Left ventricle myocardium inferior (tissue), 1 donor: ENCODE measurements at regions of chr20 and their contacts with region 1.

Region 1: DNA sequence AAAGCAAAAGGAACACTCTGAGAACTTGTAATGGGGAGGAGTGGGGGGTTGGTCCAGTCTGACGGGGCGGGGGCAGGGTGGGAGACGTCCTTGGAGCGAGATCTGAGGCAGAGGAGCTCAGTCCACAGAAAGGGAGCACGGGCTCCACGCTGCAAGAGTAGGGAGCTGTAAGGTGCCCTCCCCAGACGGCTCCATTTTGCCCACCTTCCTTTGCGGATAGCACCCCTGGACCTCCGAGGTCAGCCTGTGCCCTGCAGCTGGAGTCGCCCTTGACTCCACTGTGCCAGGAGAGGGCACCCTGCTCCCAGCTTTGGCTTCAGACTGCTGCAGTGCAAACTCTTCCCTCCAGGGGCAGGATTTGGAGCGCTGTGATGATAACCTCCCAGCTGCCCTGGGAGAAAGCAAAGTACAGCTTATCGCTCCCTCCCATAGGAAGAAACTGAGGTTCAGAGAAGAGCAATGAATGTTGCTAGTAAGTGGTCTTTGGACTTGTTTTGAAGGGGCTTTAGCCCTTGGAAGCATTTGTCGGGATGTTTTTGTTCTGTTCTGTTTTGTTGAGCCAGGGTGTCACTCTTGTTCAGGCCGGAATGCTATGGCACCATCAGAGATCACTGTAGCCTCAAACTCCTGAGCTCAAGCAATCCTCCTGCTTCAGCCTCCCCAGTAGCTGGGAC is 9.5 kb upstream of the AHCY start:
- DNase-seq: peak; percentile 82
- H3K4me3 ChIP-seq: peak overlapping the region; percentile 50
- H3K27ac ChIP-seq: no peak overlapping the region
- H3K4me1 ChIP-seq: peaks cover 20% of the 10 kb centered on the region
- H3K27me3 ChIP-seq: peaks cover 14% of the 10 kb centered on the region
- CTCF ChIP-seq: peak; percentile 100

Region 2: DNA sequence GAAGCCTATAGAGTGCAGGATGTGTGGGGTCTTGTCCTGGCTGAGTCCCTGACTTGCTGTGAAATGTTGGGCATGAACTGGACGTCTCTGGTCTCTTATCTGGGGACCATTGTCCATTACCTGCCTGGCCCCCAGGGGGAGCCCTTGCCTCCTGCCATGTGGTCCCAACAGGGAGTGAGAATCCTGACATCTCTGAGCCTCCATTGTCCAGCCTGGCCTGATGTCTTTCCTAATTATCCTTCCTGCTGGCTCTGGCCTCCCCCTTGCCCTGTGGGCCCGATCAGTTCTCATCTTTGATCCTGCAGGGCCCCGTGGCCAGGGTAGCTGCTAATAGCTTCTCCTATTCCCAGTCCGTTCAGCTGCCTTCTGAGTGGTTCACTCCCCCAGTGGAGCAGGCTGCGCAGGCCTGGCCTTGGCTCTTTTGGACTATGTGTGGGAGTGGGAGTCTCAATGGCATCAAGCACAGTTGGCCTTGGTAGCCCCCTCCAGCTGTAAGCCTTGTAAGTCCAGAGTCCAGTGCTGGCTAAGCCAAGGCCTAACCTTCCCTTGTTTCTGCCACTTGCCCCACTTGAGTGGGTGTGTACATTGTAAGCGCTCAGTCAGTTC is 396.9 kb before region 1 on chr20:
- intact Hi-C with region 1: no loop called
- DNase-seq: peak; percentile 18
- H3K4me3 ChIP-seq: no peak overlapping the region
- H3K27ac ChIP-seq: no peak overlapping the region
- H3K4me1 ChIP-seq: no peaks in the 10 kb centered on the region
- H3K27me3 ChIP-seq: no peaks in the 10 kb centered on the region
- CTCF ChIP-seq: peak; percentile 55

Region 3: GRCh38 chr20:34473262-34473883 is 160.7 kb after region 1 on chr20:
- intact Hi-C with region 1: loop called (anchors 10 kb)
- DNase-seq: peak; percentile 38
- H3K4me3 ChIP-seq: no peak overlapping the region
- H3K27ac ChIP-seq: peak overlapping the region; percentile 10
- H3K4me1 ChIP-seq: peaks cover 31% of the 10 kb centered on the region
- H3K27me3 ChIP-seq: no peaks in the 10 kb centered on the region
- CTCF ChIP-seq: peak; percentile 48